ENCODE measurements at regions of chr12 and their contacts with region 1.

Region 1: GRCh38 chr12:47032644-47033043 is 46.8 kb upstream of the PCED1B start:
- DNase-seq: peak; percentile 78
- ATAC-seq: peak; percentile 81
- H3K4me3 ChIP-seq: no peak overlapping the region
- H3K4me3 Mint-ChIP-seq: no peak overlapping the region
- H3K27ac ChIP-seq: no peak overlapping the region
- H3K27ac Mint-ChIP-seq: no peak overlapping the region
- H3K4me1 ChIP-seq: peaks cover 0 to 3% of the 10 kb centered on the region in 2 donors
- H3K4me1 Mint-ChIP-seq: peaks cover 8% of the 10 kb centered on the region
- H3K27me3 ChIP-seq: no peaks in the 10 kb centered on the region
- H3K27me3 Mint-ChIP-seq: no peaks in the 10 kb centered on the region
- CTCF ChIP-seq: peak; percentile 77

Region 2: DNA sequence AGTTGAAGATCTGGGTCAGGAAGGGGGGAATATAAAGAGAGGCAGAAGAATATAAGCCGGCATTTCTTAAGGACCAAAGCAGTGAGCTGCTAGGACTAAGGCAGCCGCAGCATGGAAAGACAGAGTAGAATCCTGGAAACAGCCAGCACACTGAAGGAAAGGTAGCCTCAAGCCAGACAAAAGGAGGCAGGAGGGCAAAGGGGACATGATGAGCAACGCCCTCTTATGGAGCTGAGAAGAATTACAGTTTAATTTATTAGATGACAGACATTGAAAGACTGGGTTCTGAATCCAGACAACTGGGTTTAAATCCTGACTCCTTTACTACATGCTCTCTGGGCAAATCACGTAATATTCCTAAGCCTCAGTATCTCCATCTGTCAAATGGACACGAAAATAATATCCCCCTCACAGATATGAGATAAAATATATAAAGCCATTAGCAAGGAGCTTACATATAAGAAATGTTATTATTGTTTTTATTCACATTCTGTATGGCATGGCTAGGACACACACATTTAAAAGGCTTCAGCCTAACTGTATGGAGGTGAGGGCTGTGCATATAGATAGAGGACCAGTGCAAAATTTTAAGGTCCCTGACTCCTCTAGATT is 38.7 kb after region 1 on chr12:
- CTCF ChIA-PET with region 1: interaction called, 14 read pairs
- POLR2A ChIA-PET with region 1: no interaction called
- intact Hi-C with region 1: no loop called
- DNase-seq: peak; percentile 43
- ATAC-seq: no peak
- H3K4me3 ChIP-seq: no peak overlapping the region
- H3K4me3 Mint-ChIP-seq: no peak overlapping the region
- H3K27ac ChIP-seq: no peak overlapping the region
- H3K27ac Mint-ChIP-seq: no peak overlapping the region
- H3K4me1 ChIP-seq: no peaks in the 10 kb centered on the region
- H3K4me1 Mint-ChIP-seq: no peaks in the 10 kb centered on the region
- H3K27me3 ChIP-seq: no peaks in the 10 kb centered on the region
- H3K27me3 Mint-ChIP-seq: no peaks in the 10 kb centered on the region
- CTCF ChIP-seq: peak; percentile 63

Region 3: DNA sequence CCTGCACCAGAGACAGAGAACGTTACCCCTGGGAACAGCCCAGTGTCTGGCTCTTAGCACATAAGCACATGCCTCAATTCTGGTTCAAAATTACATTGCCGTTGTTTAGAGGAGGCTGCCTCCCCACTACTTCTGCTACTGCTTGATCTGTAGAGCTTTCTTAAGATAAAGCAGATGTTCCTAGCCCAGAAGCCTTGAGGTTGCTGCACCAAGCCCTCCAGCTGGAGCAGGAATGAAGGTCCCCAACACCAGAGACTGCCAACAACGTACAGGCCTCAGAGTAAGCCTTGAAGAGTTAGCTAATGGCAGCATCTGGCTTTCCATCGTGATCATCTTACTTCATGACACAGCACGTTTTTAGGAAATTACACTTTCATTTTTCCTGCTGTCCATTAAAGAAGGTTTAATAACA is 81.8 kb after region 1 on chr12:
- CTCF ChIA-PET with region 1: no interaction called
- POLR2A ChIA-PET with region 1: no interaction called
- intact Hi-C with region 1: no loop called
- DNase-seq: no peak
- ATAC-seq: no peak
- H3K4me3 ChIP-seq: no peak overlapping the region
- H3K4me3 Mint-ChIP-seq: no peak overlapping the region
- H3K27ac ChIP-seq: no peak overlapping the region
- H3K27ac Mint-ChIP-seq: no peak overlapping the region
- H3K4me1 ChIP-seq: peaks cover 0 to 2% of the 10 kb centered on the region in 2 donors
- H3K4me1 Mint-ChIP-seq: no peaks in the 10 kb centered on the region
- H3K27me3 ChIP-seq: no peaks in the 10 kb centered on the region
- H3K27me3 Mint-ChIP-seq: no peaks in the 10 kb centered on the region
- CTCF ChIP-seq: no peak

Region 4: GRCh38 chr12:47216150-47216677 is 183.6 kb after region 1 on chr12:
- CTCF ChIA-PET with region 1: interaction called, 8 read pairs
- POLR2A ChIA-PET with region 1: no interaction called
- intact Hi-C with region 1: loop called (anchors 5 kb)
- DNase-seq: peak; percentile 88
- ATAC-seq: peak; percentile 85
- H3K4me3 ChIP-seq: peak overlapping the region; percentile 56 to 80 (median 60)
- H3K4me3 Mint-ChIP-seq: peak overlapping the region; percentile 90
- H3K27ac ChIP-seq: peak overlapping the region; percentile 78 to 89
- H3K27ac Mint-ChIP-seq: peak overlapping the region; percentile 92
- H3K4me1 ChIP-seq: peaks cover 63 to 73% of the 10 kb centered on the region in 2 donors
- H3K4me1 Mint-ChIP-seq: peaks cover 56% of the 10 kb centered on the region
- H3K27me3 ChIP-seq: no peaks in the 10 kb centered on the region
- H3K27me3 Mint-ChIP-seq: no peaks in the 10 kb centered on the region
- CTCF ChIP-seq: no peak

Region 5: DNA sequence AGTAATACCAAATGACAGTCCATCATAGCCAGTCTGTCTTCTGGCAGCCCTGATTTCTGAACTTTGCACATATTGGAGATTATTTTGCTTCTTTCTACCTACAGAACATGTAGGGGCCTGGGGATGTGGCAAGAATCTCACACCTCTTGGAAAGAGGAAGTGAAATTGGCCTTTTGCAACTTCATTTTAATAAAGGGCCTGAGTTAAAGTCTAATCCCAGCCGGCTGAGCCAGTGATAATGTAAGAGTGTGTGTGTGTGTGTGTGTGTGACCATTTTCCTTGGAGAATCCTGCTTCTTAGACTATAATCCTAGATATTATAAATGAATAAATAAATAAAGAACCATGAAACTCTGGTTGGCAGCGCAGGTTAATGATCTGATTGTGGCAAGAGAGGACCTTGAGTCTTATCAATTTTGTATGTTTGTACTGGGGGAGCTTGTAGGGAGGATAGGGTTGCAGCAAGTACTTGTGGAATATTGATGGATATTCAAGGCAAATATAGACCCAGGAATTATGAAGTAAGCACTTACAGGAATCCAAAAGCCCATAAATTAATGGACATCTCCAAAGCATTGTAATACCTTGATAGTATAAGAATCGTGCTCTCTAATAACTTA is 280.3 kb after region 1 on chr12:
- CTCF ChIA-PET with region 1: interaction called, 62 read pairs
- POLR2A ChIA-PET with region 1: no interaction called
- intact Hi-C with region 1: no loop called
- DNase-seq: peak; percentile 78
- ATAC-seq: peak; percentile 79
- H3K4me3 ChIP-seq: peak overlapping the region in 1 of 5 experiments; percentile 0
- H3K4me3 Mint-ChIP-seq: peak overlapping the region; percentile 17
- H3K27ac ChIP-seq: peak overlapping the region; percentile 40 to 61
- H3K27ac Mint-ChIP-seq: peak overlapping the region; percentile 68
- H3K4me1 ChIP-seq: peaks cover 51 to 65% of the 10 kb centered on the region in 2 donors
- H3K4me1 Mint-ChIP-seq: peaks cover 63% of the 10 kb centered on the region
- H3K27me3 ChIP-seq: no peaks in the 10 kb centered on the region
- H3K27me3 Mint-ChIP-seq: no peaks in the 10 kb centered on the region
- CTCF ChIP-seq: no peak

Region 6: DNA sequence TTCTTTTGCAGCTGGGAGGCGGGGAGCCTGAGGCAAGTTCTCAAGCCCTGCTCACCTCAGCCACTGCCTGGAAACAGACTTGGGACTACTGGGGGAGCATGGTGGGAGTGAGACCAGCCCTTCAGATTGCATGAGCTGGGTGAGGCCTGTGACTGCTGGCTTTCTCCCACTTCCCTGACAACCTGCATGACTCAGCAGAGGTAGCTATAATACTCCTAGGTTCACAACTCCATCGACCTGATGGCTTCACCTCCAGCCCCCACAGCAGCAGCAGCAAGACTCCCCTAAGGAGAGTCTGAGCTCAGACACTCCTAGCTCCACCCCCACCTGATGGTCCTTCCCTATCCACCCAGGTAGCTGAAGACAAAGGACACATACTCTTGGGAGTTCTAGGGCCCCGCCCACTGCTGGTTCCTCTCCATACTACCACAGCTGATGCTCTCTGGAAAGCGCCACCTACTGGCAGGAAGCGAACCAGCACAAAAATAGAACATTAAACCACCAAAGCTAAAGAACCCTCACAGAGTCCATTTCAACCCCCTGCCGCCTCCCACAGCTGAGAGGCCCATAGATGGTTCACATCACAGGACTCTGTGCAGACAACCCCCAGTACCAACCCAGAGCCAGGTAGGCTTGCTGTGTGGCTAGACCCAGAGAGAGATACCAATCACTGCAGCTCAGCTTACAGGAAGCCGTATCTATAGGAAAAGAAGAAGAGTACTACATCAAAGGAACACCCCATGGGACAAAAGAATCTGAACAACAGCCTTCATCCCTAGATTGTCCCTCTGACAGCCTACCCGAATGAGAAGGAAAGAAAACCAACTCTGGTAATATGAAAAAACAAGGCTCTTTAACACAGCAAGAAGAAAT is 604.5 kb after region 1 on chr12:
- CTCF ChIA-PET with region 1: interaction called, 10 read pairs
- POLR2A ChIA-PET with region 1: no interaction called
- intact Hi-C with region 1: no loop called
- DNase-seq: peak; percentile 31
- ATAC-seq: no peak
- H3K4me3 ChIP-seq: no peak overlapping the region
- H3K4me3 Mint-ChIP-seq: no peak overlapping the region
- H3K27ac ChIP-seq: no peak overlapping the region
- H3K27ac Mint-ChIP-seq: peak overlapping the region; percentile 15
- H3K4me1 ChIP-seq: no peaks in the 10 kb centered on the region
- H3K4me1 Mint-ChIP-seq: no peaks in the 10 kb centered on the region
- H3K27me3 ChIP-seq: no peaks in the 10 kb centered on the region
- H3K27me3 Mint-ChIP-seq: no peaks in the 10 kb centered on the region
- CTCF ChIP-seq: peak; percentile 35

Measured in B cell (primary cell).